Mammary epithelial cell (primary cell): ENCODE measurements at regions of chr18 and their contacts with region 1.

Region 1: GRCh38 chr18:72819050-72819449 is 48.7 kb downstream of the NETO1 start:
- DNase-seq: no peak
- H3K4me3 ChIP-seq: no peak overlapping the region
- H3K27ac ChIP-seq: no peak overlapping the region
- H3K4me1 ChIP-seq: peaks cover 3% of the 10 kb centered on the region
- H3K27me3 ChIP-seq: no peaks in the 10 kb centered on the region
- CTCF ChIP-seq: peak in 1 of 2 donors; percentile 8

Region 2: DNA sequence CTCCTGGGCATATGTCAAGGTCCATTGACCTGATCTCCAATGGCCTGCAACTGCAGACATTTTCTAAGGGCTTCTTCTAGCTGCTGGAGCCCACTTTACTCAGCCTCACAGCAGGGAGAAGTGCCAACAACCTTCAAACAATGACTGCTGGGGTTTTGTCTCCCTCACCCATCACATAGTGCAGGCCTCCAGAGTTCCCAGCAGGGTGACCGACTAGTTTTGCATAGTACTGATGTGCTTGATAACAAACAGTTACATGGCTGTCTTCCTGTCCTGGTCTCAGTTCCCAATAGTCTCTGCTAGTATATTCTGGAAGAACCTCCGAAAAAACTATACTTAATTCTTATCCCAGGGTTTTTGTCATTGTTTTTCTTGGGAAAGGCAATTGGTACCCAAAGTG is 59.1 kb after region 1 on chr18:
- CTCF ChIA-PET with region 1: no interaction called
- dilution Hi-C with region 1: loop called (anchors 5 kb)
- in situ Hi-C with region 1: no loop called
- intact Hi-C with region 1: no loop called
- DNase-seq: no peak
- H3K4me3 ChIP-seq: no peak overlapping the region
- H3K27ac ChIP-seq: no peak overlapping the region
- H3K4me1 ChIP-seq: no peaks in the 10 kb centered on the region
- H3K27me3 ChIP-seq: no peaks in the 10 kb centered on the region
- CTCF ChIP-seq: no peak